Activated T-helper 2 cell treated with anti-CD3 and anti-CD28 coated beads, Interferon-gamma antibody, Interleukin-2, Interleukin-4, amounts not matched to agents 10 μg/mL and 5 μg/mL and 100 μg/mL, durations not matched to agents 14 hours and 24 hours and 36 hours (primary cell): ENCODE measurements at regions of chr16 and their contacts with region 1.

Region 1: DNA sequence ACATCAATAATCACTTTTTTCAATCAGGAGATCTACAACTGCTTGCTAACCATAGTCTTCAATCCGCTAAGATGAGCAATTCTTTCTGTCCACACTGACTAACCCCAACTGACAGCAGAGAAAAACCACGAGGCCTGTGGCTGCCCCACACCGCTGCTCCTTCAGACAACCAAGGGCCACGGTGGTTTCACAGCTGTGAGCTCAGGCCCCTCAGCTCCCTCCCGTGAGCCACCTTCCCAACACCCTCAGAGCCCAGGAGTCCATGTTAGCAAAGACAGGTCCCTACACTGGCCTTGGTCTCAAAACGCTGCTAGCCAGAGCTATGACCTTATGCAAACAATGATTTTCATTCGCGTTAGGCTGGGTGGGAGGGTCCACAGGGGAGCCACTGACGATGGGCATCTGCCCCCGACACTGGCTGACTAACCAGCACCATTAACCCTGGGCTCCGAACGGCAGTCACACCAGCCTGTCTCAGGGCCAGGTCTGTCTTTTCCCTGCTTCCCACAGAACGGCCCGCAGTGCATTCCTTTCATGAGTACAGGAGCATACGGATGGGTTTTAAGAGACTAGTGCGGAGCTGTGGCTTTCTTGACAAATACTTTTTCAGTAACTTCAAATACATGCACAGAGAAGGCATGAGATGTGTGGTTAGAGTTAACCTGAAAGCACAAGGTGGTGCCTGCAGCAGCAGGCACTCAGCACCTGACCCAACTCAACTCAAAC is 67.3 kb downstream of the ANKRD11 start:
- DNase-seq: peak; percentile 28
- H3K4me3 Mint-ChIP-seq: peak overlapping the region; percentile 10
- H3K27ac Mint-ChIP-seq: peak overlapping the region; percentile 87
- H3K4me1 Mint-ChIP-seq: peaks cover 58% of the 10 kb centered on the region
- H3K27me3 Mint-ChIP-seq: no peaks in the 10 kb centered on the region

Region 2: GRCh38 chr16:89319883-89320781 is 102.9 kb before region 1 on chr16:
- intact Hi-C with region 1: loop called (anchors 5 kb)
- DNase-seq: no peak
- H3K4me3 Mint-ChIP-seq: no peak overlapping the region
- H3K27ac Mint-ChIP-seq: peak overlapping the region; percentile 48
- H3K4me1 Mint-ChIP-seq: peaks cover 79% of the 10 kb centered on the region
- H3K27me3 Mint-ChIP-seq: no peaks in the 10 kb centered on the region

Region 3: DNA sequence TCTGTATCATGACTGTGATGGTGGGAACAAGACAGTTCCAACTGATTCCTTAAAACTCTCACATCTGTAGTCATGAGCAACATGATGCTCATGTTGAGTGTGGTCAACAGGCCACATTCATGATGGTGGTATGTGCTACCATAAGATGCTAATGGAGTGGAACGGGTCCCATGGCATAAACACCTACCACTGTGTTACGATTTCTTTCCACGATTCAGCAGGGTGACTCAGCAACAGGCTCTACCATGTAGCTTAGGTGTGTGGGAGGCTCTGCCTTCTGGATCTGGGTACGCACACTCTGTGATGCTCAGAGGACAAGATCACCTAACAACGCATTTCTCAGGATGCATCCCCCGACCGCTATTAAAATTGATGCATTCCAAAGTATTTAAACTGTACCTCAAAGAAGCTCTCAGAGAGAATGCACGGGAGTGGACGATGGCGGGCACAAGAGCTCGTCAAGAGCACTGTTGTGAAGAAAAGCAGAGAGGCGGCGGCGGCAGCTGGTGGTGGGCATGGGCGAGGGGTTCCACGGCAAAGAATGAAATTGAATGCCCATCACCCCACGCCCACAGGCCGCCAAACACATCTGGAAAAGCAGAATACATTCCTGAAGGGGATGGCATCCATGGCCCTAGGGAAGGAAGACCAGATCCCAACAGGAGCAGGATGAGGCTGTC is 72.2 kb before region 1 on chr16:
- intact Hi-C with region 1: loop called (anchors 2 kb)
- DNase-seq: no peak
- H3K4me3 Mint-ChIP-seq: peak overlapping the region; percentile 23
- H3K27ac Mint-ChIP-seq: peak overlapping the region; percentile 89
- H3K4me1 Mint-ChIP-seq: peaks cover 70% of the 10 kb centered on the region
- H3K27me3 Mint-ChIP-seq: no peaks in the 10 kb centered on the region

Region 4: DNA sequence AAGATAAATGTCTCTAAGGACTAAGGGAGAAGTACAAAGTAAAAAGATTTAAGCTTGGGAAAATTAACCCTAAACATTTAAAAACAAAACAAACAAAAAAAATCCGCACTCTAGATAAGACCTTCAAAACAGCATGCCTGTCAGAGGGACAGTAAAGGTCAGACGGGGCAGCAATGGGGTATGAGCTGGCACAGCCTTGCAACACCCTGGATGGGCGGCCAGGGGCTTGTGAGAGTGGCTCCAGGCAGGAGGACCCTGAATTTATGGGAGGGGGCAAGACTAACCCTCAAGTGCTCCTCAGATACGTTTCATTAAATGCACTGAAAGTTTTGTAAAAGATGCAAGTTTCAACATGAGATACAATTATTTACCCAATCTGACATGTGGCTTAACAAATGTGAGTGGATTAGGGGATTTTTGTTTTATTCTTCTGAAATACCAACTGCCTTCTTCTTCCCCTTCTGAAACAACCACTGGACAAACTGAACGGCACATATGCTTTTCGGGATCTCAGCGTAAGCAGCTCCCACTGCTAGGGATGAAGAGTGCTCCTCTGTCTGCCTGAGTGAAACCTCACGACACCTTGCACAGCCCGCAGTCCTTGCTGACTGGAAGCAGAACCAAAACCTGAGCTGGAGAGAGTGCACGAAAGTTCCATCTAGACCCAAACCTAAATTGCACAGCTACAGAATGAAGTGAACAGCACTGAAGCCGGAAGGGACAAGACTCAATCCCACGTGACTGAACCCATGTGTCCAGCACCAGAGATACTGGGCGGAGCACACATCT is 61.1 kb before region 1 on chr16:
- intact Hi-C with region 1: loop called (anchors 2 kb)
- DNase-seq: no peak
- H3K4me3 Mint-ChIP-seq: peak overlapping the region; percentile 62
- H3K27ac Mint-ChIP-seq: peak overlapping the region; percentile 86
- H3K4me1 Mint-ChIP-seq: peaks cover 88% of the 10 kb centered on the region
- H3K27me3 Mint-ChIP-seq: no peaks in the 10 kb centered on the region

Region 5: GRCh38 chr16:89437991-89438390 is 14.9 kb after region 1 on chr16:
- intact Hi-C with region 1: loop called (anchors 2 kb)
- DNase-seq: no peak
- H3K4me3 Mint-ChIP-seq: no peak overlapping the region
- H3K27ac Mint-ChIP-seq: no peak overlapping the region
- H3K4me1 Mint-ChIP-seq: peaks cover 80% of the 10 kb centered on the region
- H3K27me3 Mint-ChIP-seq: no peaks in the 10 kb centered on the region

Region 6: DNA sequence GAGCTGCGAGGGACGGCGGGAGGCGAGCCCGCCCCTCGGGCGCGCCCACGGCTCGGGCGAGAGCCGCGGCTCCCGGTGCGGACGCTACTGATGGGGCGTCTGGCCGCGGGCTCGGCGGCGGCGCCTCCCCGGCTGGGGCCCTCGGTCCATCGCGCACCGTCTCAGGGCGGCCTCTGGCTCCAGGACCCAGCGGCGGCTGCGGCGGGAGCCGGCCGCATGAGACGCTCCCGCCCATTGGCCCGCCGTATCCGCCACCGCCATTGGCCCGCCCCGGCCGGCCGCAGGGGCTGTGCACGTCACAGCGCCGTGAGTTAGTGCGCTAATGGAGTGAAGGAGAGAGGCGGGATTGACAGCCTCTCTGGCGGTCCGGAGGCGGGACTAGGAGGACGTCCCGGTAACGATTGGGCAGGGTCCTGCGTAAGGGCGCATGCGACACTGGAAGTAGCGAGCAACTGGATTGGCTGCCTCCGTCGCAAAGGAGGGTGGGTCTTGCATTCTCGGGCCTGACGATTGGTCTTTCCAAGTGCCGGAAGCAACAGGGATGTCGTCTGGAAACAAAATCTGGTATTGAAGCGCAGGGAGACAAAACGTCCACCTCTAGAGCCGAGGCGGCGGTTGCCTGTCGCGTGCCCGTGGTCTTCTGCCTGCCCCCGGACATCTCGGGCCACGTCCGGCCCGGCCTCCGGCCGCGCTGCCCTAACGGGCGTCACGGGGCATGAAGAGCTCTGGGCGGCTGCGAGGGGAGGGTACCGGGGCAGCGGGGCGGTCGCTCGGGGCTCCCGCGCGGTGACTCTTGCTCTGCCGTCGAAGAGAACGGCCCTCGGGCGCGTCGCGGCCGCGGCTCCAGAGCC is 67.5 kb after region 1 on chr16 and contains the start of gene ANKRD11:
- intact Hi-C with region 1: loop called (anchors 1 kb)
- DNase-seq: peak; percentile 99
- H3K4me3 Mint-ChIP-seq: peak within 1 kb of the TSS; percentile 87
- H3K27ac Mint-ChIP-seq: peak within 1 kb of the TSS; percentile 89
- H3K4me1 Mint-ChIP-seq: peaks cover 42% of the 10 kb centered on the region
- H3K27me3 Mint-ChIP-seq: no peaks in the 10 kb centered on the region
- total RNA-seq, gene ANKRD11: 142 and 144 TPM in 2 replicates